Dorsolateral prefrontal cortex (tissue), 120 donors: ENCODE measurements at regions of chr4 and their contacts with region 1.

Region 1: DNA sequence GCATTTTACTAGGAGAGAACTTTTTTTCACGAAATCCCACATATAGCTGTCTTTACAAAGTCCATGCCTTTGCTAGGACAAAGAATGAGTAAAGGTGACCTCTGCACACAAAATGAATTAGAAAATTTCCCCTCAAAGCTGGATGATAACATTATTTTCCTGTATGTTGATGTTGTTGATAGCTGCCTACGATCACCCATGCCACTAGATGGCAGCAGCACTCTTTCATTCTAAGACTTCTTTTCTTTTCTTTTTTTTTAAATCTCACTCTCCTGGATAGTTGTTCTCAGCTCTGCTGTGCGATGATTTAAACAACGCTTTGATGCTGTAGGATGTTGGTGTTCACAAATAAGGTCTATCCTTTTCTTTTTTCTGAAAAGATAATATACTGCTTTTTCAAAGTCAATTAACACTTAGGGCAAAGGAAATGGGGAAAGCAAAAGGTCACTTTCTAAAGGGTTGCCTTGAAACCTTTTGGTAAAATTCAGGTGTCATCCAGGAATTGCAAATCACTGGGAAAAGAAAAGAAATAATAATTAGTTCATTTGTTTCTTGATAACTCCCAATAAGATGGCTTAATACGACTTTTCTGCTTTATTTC is 266.8 kb downstream of the C4orf33 start:
- DNase-seq: peak in 6 of 10 donors; percentile 12 to 70 (median 39)
- H3K4me3 ChIP-seq: no peak overlapping the region
- H3K27ac ChIP-seq: no peak overlapping the region
- H3K27me3 ChIP-seq: peaks cover 0 to 2% (median 0%) of the 10 kb centered on the region in 45 donors
- CTCF ChIP-seq: peak; percentile 72 to 97 (median 87)

Region 2: GRCh38 chr4:128686032-128686465 is 676.7 kb before region 1 on chr4:
- intact Hi-C with region 1: no loop called
- DNase-seq: no peak
- H3K4me3 ChIP-seq: no peak overlapping the region
- H3K27ac ChIP-seq: no peak overlapping the region
- H3K27me3 ChIP-seq: no peaks in the 10 kb centered on the region
- CTCF ChIP-seq: no peak

Region 3: DNA sequence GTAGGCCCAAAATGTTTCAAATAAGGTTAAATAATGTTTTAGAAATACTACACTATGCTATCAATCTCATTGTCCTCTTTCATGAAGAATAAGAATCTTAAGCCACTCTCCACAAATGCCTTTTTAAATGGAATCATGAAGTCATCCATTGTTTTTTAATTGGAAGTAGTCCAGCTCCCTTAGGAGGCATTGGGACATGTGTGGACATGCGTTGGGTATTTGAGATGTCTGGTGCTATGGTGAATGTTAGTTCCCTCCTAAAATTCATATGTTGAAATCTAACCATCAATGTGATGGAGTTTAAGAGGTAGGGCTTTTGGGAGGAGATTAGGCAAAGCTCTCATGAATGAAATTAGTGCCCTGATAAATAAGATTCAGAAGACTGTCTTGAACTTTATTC is 22.2 kb after region 1 on chr4:
- intact Hi-C with region 1: loop called in 1 of 2 experiments (anchors 1 kb)
- DNase-seq: no peak
- H3K4me3 ChIP-seq: no peak overlapping the region
- H3K27ac ChIP-seq: no peak overlapping the region
- H3K27me3 ChIP-seq: no peaks in the 10 kb centered on the region
- CTCF ChIP-seq: no peak

Region 4: DNA sequence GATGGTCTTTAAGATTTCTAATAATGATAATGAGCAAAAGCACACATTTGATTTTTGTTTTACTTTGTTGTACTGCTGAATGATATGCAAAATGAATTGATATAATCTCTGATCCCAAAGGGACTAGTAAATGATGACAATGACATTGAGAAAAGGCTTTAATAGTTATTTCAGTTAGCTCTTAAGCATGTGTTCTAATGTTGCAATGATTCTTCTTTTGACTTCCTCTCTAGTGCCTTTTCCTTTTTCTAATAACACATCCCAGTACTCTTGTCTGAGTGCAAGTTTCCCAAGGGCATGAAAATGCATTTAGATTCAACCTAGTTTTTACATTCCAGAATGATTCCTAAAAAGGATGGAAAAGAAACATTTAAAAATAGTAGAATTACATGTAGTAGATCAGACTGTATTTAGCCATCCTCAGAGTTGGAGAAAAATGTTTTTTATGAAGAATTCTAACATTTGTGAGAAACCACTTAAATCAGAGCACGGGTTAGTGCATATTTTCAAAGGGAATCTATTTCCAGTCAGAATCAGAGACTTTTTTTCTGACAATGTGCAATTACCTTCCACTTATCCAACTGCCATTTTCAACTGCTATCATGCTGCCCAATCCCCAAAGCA is 242.0 kb after region 1 on chr4:
- intact Hi-C with region 1: no loop called
- DNase-seq: no peak
- H3K4me3 ChIP-seq: no peak overlapping the region
- H3K27ac ChIP-seq: no peak overlapping the region
- H3K27me3 ChIP-seq: no peaks in the 10 kb centered on the region
- CTCF ChIP-seq: no peak

Region 5: GRCh38 chr4:129641179-129641578 is 278.4 kb after region 1 on chr4:
- intact Hi-C with region 1: loop called (anchors 2 to 5 kb)
- DNase-seq: peak in 4 of 10 donors; percentile 7 to 57 (median 40)
- H3K4me3 ChIP-seq: no peak overlapping the region
- H3K27ac ChIP-seq: no peak overlapping the region
- H3K27me3 ChIP-seq: peaks cover 0 to under 1% (median 0%) of the 10 kb centered on the region in 45 donors
- CTCF ChIP-seq: peak; percentile 53 to 87 (median 75)

Region 6: DNA sequence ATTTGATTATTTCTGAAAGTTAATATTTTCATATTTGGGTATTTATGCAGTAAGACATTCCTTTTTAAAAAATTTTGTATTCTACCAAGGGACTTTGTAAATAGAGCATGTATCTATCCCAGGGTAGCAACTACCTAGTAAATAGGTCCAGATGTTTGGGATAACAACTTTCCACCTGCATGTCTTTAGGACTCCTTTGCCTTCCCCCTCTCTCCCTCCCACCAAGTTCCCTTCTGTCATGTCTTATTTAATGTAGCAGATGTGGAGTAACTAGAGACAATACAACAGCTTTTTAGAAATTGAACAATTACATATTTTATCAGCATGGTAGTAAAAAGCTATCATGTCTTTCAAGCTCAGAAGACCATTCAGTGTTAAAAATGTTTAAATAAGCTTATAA is 554.2 kb after region 1 on chr4:
- intact Hi-C with region 1: no loop called
- DNase-seq: no peak
- H3K4me3 ChIP-seq: no peak overlapping the region
- H3K27ac ChIP-seq: no peak overlapping the region
- H3K27me3 ChIP-seq: no peaks in the 10 kb centered on the region
- CTCF ChIP-seq: no peak